CD4-positive, alpha-beta memory T cell (primary cell): ENCODE measurements at regions of chr12 and their contacts with region 1.

Region 1: GRCh38 chr12:131608740-131609690 is 101.9 kb upstream of the SFSWAP start:
- DNase-seq: peak in 4 of 5 donors; percentile 41 to 62 (median 50)
- H3K4me3 ChIP-seq: no peak overlapping the region
- H3K4me3 Mint-ChIP-seq: peak overlapping the region in 7 of 8 donors; percentile 25 to 74 (median 44)
- H3K27ac ChIP-seq: no peak overlapping the region
- H3K27ac Mint-ChIP-seq: peak overlapping the region in 5 of 7 donors; percentile 52 to 72 (median 61)
- H3K4me1 ChIP-seq: peaks cover 56% of the 10 kb centered on the region
- H3K4me1 Mint-ChIP-seq: peaks cover 38 to 59% (median 54%) of the 10 kb centered on the region in 4 donors
- H3K27me3 ChIP-seq: no peaks in the 10 kb centered on the region
- H3K27me3 Mint-ChIP-seq: no peaks in the 10 kb centered on the region

Region 2: DNA sequence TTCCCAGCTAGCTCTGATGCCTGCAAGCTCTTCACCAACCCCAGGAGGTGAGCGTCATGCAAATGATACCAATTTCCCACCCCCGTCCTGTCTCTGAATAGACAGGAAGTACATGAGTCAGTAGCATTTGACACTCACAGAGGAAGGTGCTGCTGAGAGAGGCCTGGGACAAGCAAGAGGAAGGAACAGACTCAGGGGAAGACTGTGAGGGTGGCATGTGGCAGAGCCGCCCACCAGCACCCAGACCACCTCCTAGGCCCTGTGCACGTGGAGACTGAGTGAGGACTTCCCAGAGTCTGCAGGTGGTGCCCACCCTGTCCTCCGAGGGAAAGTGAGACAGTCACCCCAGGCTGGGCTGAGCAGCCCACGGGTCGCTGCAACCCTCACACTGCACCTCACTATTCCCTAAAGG is 97.6 kb before region 1 on chr12:
- CTCF ChIA-PET with region 1: no interaction called
- POLR2A ChIA-PET with region 1: interaction called, 4 read pairs
- intact Hi-C with region 1: loop called (anchors 1 kb)
- DNase-seq: peak; percentile 48 to 70 (median 60)
- H3K4me3 ChIP-seq: no peak overlapping the region
- H3K4me3 Mint-ChIP-seq: peak overlapping the region in 6 of 8 donors; percentile 12 to 58 (median 45)
- H3K27ac ChIP-seq: no peak overlapping the region
- H3K27ac Mint-ChIP-seq: peak overlapping the region; percentile 70 to 90 (median 89)
- H3K4me1 ChIP-seq: peaks cover 17% of the 10 kb centered on the region
- H3K4me1 Mint-ChIP-seq: peaks cover 12 to 19% (median 15%) of the 10 kb centered on the region in 4 donors
- H3K27me3 ChIP-seq: no peaks in the 10 kb centered on the region
- H3K27me3 Mint-ChIP-seq: peaks cover 3 to 5% of the 10 kb centered on the region in 2 donors

Region 3: GRCh38 chr12:131536337-131536736 is 72.7 kb before region 1 on chr12:
- CTCF ChIA-PET with region 1: no interaction called
- POLR2A ChIA-PET with region 1: interaction called, 11 read pairs
- intact Hi-C with region 1: loop called (anchors 10 kb)
- DNase-seq: peak; percentile 61 to 78 (median 71)
- H3K4me3 ChIP-seq: no peak overlapping the region
- H3K4me3 Mint-ChIP-seq: peak overlapping the region in 7 of 8 donors; percentile 9 to 79 (median 54)
- H3K27ac ChIP-seq: peak overlapping the region; percentile 11
- H3K27ac Mint-ChIP-seq: peak overlapping the region; percentile 75 to 93 (median 89)
- H3K4me1 ChIP-seq: peaks cover 35% of the 10 kb centered on the region
- H3K4me1 Mint-ChIP-seq: peaks cover 12 to 40% (median 29%) of the 10 kb centered on the region in 4 donors
- H3K27me3 ChIP-seq: no peaks in the 10 kb centered on the region
- H3K27me3 Mint-ChIP-seq: no peaks in the 10 kb centered on the region

Region 4: GRCh38 chr12:131592972-131593371 is 16.0 kb before region 1 on chr12:
- CTCF ChIA-PET with region 1: interaction called, 5 read pairs
- POLR2A ChIA-PET with region 1: interaction called, 15 read pairs
- intact Hi-C with region 1: no loop called
- DNase-seq: no peak
- H3K4me3 ChIP-seq: no peak overlapping the region
- H3K4me3 Mint-ChIP-seq: peak overlapping the region in 1 of 8 donors; percentile 44
- H3K27ac ChIP-seq: no peak overlapping the region
- H3K27ac Mint-ChIP-seq: peak overlapping the region in 6 of 7 donors; percentile 31 to 76 (median 52)
- H3K4me1 ChIP-seq: peaks cover 11% of the 10 kb centered on the region
- H3K4me1 Mint-ChIP-seq: peaks cover 10 to 16% (median 10%) of the 10 kb centered on the region in 4 donors
- H3K27me3 ChIP-seq: no peaks in the 10 kb centered on the region
- H3K27me3 Mint-ChIP-seq: no peaks in the 10 kb centered on the region

Region 5: DNA sequence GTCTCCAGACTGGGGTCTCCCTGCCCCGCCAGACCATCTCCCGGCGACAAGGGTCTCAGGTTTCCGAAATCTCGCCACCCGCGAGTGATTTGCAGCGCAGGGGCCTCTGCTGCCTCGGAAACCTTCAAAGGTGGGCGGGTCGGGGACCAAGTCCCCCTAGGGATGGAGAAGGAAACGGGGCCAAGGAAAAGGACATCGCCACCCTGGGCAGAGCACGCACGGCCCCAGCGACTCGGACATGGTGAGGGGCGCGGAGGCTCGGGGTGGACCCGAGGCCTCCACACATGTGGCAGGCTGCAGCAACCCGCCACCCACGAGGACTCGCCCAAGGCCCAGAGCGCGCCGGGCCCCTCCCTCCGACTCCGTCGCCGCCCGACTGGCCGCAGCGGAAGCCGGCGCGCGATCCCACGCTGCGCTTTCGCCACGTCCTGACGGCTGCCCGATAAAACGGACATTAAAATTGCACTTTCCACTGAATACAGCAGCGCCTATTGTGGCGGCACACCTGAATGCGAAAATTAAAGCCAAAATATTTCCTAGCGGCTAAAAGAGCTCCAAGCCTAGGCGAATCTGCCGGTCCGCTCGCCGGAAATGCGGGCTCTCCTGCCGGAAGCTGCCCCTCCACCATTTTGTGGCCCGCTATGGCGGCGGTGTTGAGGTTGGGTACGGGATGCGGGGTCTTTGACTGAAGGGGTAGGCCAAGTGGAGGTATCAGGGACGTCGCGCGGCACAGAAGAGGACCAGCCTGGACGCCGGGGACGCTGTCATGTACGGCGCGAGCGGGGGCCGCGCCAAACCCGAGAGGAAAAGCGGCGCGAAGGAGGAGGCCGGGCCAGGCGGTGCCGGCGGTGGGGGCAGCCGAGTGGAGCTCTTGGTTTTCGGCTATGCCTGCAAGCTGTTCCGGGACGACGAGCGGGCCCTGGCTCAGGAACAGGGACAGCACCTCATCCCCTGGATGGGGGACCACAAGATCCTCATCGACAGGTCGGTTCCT is 101.7 kb after region 1 on chr12 and contains the start of gene SFSWAP:
- CTCF ChIA-PET with region 1: interaction called, 4 read pairs
- POLR2A ChIA-PET with region 1: interaction called, 17 read pairs
- intact Hi-C with region 1: loop called (anchors 2 kb)
- DNase-seq: peak; percentile 71 to 85 (median 77)
- H3K4me3 ChIP-seq: peak within 1 kb of the TSS; percentile 94 to 99
- H3K4me3 Mint-ChIP-seq: peak within 1 kb of the TSS; percentile 92 to 100 (median 98)
- H3K27ac ChIP-seq: peak within 1 kb of the TSS; percentile 89
- H3K27ac Mint-ChIP-seq: peak within 1 kb of the TSS; percentile 94 to 98 (median 96)
- H3K4me1 ChIP-seq: peaks cover 30% of the 10 kb centered on the region
- H3K4me1 Mint-ChIP-seq: peaks cover 20 to 40% (median 26%) of the 10 kb centered on the region in 4 donors
- H3K27me3 ChIP-seq: no peaks in the 10 kb centered on the region
- H3K27me3 Mint-ChIP-seq: no peaks in the 10 kb centered on the region
- total RNA-seq, gene SFSWAP: 95.7 to 96.8 TPM

Region 6: GRCh38 chr12:132429946-132430643 is 821.1 kb after region 1 on chr12:
- CTCF ChIA-PET with region 1: no interaction called
- POLR2A ChIA-PET with region 1: no interaction called
- intact Hi-C with region 1: no loop called
- DNase-seq: peak; percentile 61 to 76 (median 72)
- H3K4me3 ChIP-seq: peak overlapping the region in 1 of 2 donors; percentile 23
- H3K4me3 Mint-ChIP-seq: peak overlapping the region; percentile 36 to 86 (median 71)
- H3K27ac ChIP-seq: no peak overlapping the region
- H3K27ac Mint-ChIP-seq: peak overlapping the region in 6 of 7 donors; percentile 32 to 75 (median 66)
- H3K4me1 ChIP-seq: peaks cover 36% of the 10 kb centered on the region
- H3K4me1 Mint-ChIP-seq: peaks cover 17 to 45% (median 24%) of the 10 kb centered on the region in 4 donors
- H3K27me3 ChIP-seq: no peaks in the 10 kb centered on the region
- H3K27me3 Mint-ChIP-seq: no peaks in the 10 kb centered on the region